CD4-positive, alpha-beta memory T cell (primary cell): ENCODE measurements at regions of chr17 and their contacts with region 1.

Region 1: GRCh38 chr17:48816774-48817590 is at the start of gene TTLL6:
- DNase-seq: peak; percentile 78 to 93 (median 81)
- H3K4me3 ChIP-seq: peak within 1 kb of the TSS; percentile 19 to 26
- H3K4me3 Mint-ChIP-seq: peak within 1 kb of the TSS; percentile 75 to 96 (median 88)
- H3K27ac ChIP-seq: no peak within 1 kb of the TSS
- H3K27ac Mint-ChIP-seq: peak within 1 kb of the TSS; percentile 14 to 79 (median 47)
- H3K4me1 ChIP-seq: peaks cover 20% of the 10 kb centered on the region
- H3K4me1 Mint-ChIP-seq: peaks cover 8 to 24% (median 18%) of the 10 kb centered on the region in 4 donors
- H3K27me3 ChIP-seq: peaks cover 4% of the 10 kb centered on the region
- H3K27me3 Mint-ChIP-seq: peaks cover 14 to 20% of the 10 kb centered on the region in 2 donors
- total RNA-seq, gene TTLL6: not detected

Region 2: GRCh38 chr17:48830840-48831548 is 14.0 kb after region 1 on chr17 and contains the start of gene CALCOCO2:
- CTCF ChIA-PET with region 1: interaction called, 6 read pairs
- POLR2A ChIA-PET with region 1: interaction called, 8 read pairs
- intact Hi-C with region 1: loop called (anchors 2 kb)
- DNase-seq: peak; percentile 78 to 85 (median 81)
- H3K4me3 ChIP-seq: peak within 1 kb of the TSS; percentile 74 to 82
- H3K4me3 Mint-ChIP-seq: peak within 1 kb of the TSS; percentile 96 to 99 (median 98)
- H3K27ac ChIP-seq: peak within 1 kb of the TSS; percentile 98
- H3K27ac Mint-ChIP-seq: peak within 1 kb of the TSS; percentile 94 to 100 (median 99)
- H3K4me1 ChIP-seq: peaks cover 46% of the 10 kb centered on the region
- H3K4me1 Mint-ChIP-seq: peaks cover 22 to 54% (median 42%) of the 10 kb centered on the region in 4 donors
- H3K27me3 ChIP-seq: no peaks in the 10 kb centered on the region
- H3K27me3 Mint-ChIP-seq: peaks cover 2 to 5% of the 10 kb centered on the region in 2 donors
- total RNA-seq, gene CALCOCO2: 107 to 118 TPM

Region 3: DNA sequence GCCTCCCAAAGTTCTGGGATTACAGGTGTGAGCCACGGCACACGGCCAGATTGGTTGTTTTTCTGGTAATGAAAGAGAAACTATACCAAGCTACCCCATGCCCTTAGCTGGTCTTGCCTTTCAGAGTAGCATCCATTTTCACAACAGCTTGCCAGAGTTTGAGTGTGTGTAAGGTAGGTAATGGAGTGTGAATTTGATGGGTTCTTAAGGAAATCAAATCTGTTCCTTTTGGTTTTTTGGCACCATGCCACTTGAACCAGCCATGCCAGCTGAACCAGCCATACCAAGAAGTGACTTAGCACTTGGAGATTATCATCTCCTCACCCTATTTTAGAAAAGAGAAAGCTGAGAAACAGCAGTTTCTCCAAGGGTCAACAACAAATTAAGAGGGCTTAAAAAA is 19.0 kb after region 1 on chr17:
- CTCF ChIA-PET with region 1: interaction called, 6 read pairs
- POLR2A ChIA-PET with region 1: interaction called, 8 read pairs
- intact Hi-C with region 1: loop called (anchors 2 kb)
- DNase-seq: peak in 2 of 5 donors; percentile 5 to 13
- H3K4me3 ChIP-seq: no peak overlapping the region
- H3K4me3 Mint-ChIP-seq: peak overlapping the region in 6 of 8 donors; percentile 12 to 67 (median 56)
- H3K27ac ChIP-seq: no peak overlapping the region
- H3K27ac Mint-ChIP-seq: peak overlapping the region in 3 of 7 donors; percentile 5 to 72 (median 58)
- H3K4me1 ChIP-seq: peaks cover 96% of the 10 kb centered on the region
- H3K4me1 Mint-ChIP-seq: peaks cover 44 to 93% (median 73%) of the 10 kb centered on the region in 4 donors
- H3K27me3 ChIP-seq: no peaks in the 10 kb centered on the region
- H3K27me3 Mint-ChIP-seq: no peaks in the 10 kb centered on the region

Region 4: DNA sequence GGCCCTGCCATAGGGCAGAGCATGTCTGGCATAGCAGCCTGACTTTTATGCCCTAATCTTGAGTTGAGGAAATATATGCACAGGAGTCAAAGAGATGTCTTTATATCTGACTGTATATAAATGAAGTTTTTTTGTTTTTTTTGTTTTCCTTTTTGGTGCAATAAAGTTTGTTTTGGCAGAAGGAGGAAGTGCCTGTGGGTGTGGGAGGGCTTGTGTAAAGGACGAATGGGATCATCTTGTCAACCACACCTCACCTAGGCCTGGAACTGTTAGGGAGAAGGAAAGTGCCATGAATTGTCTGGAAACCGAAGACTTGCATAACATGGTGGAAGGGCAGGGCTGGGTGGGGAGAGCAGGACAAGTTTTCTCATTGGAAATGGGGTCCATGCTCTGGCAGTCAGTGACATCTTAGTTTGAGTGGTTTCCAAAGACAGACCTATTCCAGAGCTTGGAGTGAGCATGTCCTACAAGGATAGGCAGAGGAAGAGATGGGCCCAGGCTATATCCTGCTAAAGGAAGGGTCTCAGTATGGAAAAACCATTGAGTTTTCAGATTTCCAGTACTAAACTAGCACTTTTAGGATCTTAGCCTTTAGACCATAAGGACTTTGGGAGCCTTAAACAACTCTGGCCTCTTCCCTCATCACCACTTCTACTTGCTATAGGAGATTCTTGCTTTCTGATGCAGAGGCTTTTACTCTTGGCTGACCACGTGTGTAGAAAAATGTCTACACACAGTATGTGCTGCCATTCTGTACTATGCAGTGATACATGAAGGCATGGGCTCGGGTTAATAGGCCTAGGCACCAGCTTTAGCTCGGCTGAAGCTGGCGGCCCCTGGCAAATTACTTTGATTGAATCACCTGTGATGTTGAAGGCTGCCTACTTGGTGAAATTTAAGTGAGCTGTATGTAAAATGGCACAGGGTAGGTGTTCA is 112.2 kb after region 1 on chr17:
- CTCF ChIA-PET with region 1: no interaction called
- POLR2A ChIA-PET with region 1: no interaction called
- intact Hi-C with region 1: no loop called
- DNase-seq: no peak
- H3K4me3 ChIP-seq: no peak overlapping the region
- H3K4me3 Mint-ChIP-seq: no peak overlapping the region
- H3K27ac ChIP-seq: no peak overlapping the region
- H3K27ac Mint-ChIP-seq: peak overlapping the region in 3 of 7 donors; percentile 21 to 72 (median 57)
- H3K4me1 ChIP-seq: no peaks in the 10 kb centered on the region
- H3K4me1 Mint-ChIP-seq: peaks cover 0 to 7% (median 2%) of the 10 kb centered on the region in 4 donors
- H3K27me3 ChIP-seq: no peaks in the 10 kb centered on the region
- H3K27me3 Mint-ChIP-seq: no peaks in the 10 kb centered on the region